ENCODE measurements at regions of chr5 and their contacts with region 1.

Region 1: DNA sequence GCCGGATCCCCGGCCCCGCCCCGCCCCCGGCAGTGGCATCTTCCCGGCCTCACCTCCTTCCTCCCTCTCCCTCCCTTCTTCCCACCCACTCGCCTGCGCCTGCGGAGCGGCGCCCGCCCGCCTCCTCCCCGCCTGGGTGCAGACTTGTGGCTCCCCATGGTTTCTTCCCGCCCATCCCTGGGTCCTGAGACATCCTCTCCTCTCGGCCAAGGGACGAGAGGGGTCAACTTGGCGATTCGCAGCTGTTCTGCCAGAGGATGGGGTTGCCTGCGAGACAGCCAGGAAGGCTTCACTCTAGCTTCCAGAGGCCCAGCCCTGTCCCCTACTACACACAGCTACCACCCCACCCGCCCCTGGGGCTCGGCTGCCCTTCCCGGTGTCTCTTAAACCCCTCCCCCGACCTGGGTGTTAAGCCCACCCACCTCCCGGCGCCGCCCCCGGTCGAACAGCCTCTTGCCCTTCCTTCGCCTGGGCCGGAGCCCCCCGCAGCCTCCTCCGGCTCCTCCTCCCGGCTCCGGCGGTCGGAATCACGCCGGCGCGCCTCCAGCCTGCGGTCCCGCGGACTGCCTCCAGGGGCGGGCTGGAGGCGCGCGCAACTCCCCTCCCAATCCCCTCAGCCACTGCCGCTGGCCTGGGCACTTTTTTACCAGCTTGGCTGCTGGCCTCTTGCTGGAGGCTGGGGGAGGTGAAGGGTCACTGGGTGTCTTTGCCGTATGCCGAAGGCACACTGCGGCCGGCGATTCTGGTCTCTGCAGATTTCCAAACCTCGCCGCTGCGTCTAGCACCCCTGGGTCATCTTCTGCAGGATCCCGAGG is 1.9 kb downstream of the JADE2 start:
- DNase-seq: peak; percentile 91 to 96 (median 95)
- H3K4me3 ChIP-seq: peak overlapping the region; percentile 68 to 98 (median 89)
- H3K27ac ChIP-seq: peak overlapping the region in 1 of 2 experiments; percentile 96
- H3K4me1 ChIP-seq: peaks cover 0 to 44% (median 38%) of the 10 kb centered on the region in 4 experiments
- H3K27me3 ChIP-seq: no peaks in the 10 kb centered on the region

Region 2: GRCh38 chr5:134209477-134210240 is 317.7 kb before region 1 on chr5:
- CTCF ChIA-PET with region 1: no interaction called
- POLR2A ChIA-PET with region 1: no interaction called
- DNase-seq: no peak
- H3K4me3 ChIP-seq: no peak overlapping the region
- H3K27ac ChIP-seq: no peak overlapping the region
- H3K4me1 ChIP-seq: no peaks in the 10 kb centered on the region
- H3K27me3 ChIP-seq: no peaks in the 10 kb centered on the region

Region 3: DNA sequence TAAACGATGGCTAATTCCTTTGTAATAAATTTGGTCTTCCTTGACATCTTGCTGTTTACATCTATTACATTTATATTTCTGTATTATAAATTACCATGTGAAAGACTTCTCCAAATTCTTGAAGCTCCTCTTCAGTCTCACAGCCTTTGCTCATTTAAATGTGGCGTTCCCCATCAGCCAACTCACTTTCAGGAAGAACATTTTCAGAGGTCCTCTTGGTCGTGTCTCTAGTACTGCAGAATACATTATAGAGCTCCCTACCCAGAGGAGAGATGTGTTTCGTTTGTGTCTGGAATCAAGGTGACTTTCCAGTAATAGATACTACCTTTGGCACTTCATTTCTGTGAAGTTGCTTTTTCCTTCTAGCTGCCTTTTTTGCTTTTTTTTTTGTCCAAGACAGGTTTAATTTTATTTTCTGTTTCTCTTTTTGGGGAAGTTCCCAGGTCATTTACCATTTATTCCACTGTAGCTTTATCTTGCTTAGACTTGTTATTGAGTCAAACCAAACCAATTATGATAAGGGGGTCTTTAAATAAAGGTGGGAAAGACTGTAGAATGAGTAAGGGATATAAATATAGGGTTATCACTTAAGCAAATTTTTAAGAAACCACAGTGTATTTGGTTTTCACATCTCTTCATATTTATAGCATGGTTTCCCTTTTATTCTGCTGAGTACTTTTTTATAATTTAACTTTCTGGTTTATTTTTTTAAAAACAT is 143.2 kb before region 1 on chr5:
- CTCF ChIA-PET with region 1: no interaction called
- POLR2A ChIA-PET with region 1: no interaction called
- DNase-seq: no peak
- H3K4me3 ChIP-seq: no peak overlapping the region
- H3K27ac ChIP-seq: no peak overlapping the region
- H3K4me1 ChIP-seq: no peaks in the 10 kb centered on the region
- H3K27me3 ChIP-seq: no peaks in the 10 kb centered on the region

Region 4: DNA sequence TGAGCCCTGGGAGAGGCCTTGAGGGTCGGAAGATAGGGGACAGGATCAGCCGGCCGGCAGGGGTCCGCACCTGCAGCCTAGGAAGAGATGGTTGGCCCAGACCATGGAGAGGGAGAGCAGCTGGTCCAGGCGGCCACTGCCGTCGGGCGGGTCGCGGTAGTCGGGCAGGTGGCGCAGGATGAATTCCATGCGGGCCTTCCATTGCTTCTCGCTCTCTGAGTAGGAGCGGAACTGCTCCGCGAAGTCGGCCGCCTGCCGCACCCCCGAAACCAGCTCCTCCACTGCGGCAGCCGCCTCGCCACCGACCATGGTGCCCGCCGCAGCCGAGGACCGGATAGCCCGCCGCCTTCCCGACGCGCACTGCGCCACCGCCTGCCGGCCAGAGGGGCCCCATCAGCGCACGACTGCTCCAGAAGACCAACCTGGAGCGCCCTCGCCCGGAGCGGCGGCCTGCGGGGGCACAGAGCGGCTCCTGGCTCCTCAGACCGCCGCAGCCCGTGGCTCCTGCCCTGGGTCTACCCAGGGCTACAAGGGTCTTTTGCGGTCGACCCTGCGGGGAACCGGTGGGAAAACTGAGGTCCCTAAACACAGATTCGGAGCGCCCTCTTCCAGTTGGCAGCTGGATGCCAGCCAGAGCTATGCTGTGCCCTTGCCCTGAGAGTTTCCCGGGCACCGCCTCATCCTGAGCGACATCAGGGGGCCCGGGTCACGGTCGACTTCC is 115.6 kb before region 1 on chr5 and contains the start of gene CDKN2AIPNL:
- CTCF ChIA-PET with region 1: interaction called, 13 read pairs
- POLR2A ChIA-PET with region 1: interaction called, 7 read pairs
- DNase-seq: peak; percentile 89 to 94 (median 91)
- H3K4me3 ChIP-seq: peak within 1 kb of the TSS; percentile 65 to 90 (median 86)
- H3K27ac ChIP-seq: peak within 1 kb of the TSS in 1 of 2 experiments; percentile 84
- H3K4me1 ChIP-seq: peaks cover 9 to 24% (median 16%) of the 10 kb centered on the region in 4 experiments
- H3K27me3 ChIP-seq: no peaks in the 10 kb centered on the region

Region 5: DNA sequence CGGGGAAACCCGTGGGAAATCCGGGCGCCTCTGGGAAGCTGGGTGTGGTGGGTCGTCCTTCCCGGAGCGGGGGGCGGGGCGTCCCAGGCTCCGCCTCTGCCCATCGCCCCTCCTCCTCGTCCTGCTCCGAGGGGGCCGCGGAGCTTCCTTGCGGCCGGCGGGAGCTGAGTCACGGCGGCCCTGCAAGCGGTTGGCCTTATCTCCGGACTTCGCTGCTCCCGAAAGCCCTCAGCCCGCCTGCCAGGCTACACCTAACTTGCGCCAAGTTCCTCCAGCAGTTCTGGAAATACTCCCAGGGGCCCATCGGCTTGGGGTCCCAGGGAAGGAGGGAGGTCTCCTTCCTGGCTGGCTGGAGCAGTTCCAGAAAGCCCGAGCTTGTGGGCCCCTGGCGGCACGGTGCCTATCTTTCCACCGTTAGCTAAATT is 61.5 kb before region 1 on chr5:
- CTCF ChIA-PET with region 1: interaction called, 18 read pairs
- POLR2A ChIA-PET with region 1: interaction called, 6 read pairs
- DNase-seq: peak; percentile 84 to 88 (median 86)
- H3K4me3 ChIP-seq: peak overlapping the region; percentile 18 to 78 (median 64)
- H3K27ac ChIP-seq: peak overlapping the region; percentile 54 to 88
- H3K4me1 ChIP-seq: peaks cover 0 to 50% (median 43%) of the 10 kb centered on the region in 4 experiments
- H3K27me3 ChIP-seq: no peaks in the 10 kb centered on the region

Region 6: GRCh38 chr5:134541736-134542376 is 14.5 kb after region 1 on chr5:
- CTCF ChIA-PET with region 1: interaction called, 82 read pairs
- POLR2A ChIA-PET with region 1: interaction called, 5 read pairs
- DNase-seq: no peak
- H3K4me3 ChIP-seq: no peak overlapping the region
- H3K27ac ChIP-seq: peak overlapping the region in 1 of 2 experiments; percentile 32
- H3K4me1 ChIP-seq: peaks cover 17 to 47% (median 42%) of the 10 kb centered on the region in 4 experiments
- H3K27me3 ChIP-seq: no peaks in the 10 kb centered on the region

Region 7: GRCh38 chr5:134577796-134578363 is 50.5 kb after region 1 on chr5:
- CTCF ChIA-PET with region 1: interaction called, 20 read pairs
- POLR2A ChIA-PET with region 1: interaction called, 5 read pairs
- DNase-seq: peak; percentile 76 to 88 (median 86)
- H3K4me3 ChIP-seq: no peak overlapping the region
- H3K27ac ChIP-seq: no peak overlapping the region
- H3K4me1 ChIP-seq: peaks cover 0 to 5% (median 0%) of the 10 kb centered on the region in 4 experiments
- H3K27me3 ChIP-seq: no peaks in the 10 kb centered on the region

Measured in common myeloid progenitor, CD34-positive (primary cell).